ENCODE measurements at regions of chr4 and their contacts with region 1.

Region 1: GRCh38 chr4:185096032-185096653 is 46.9 kb upstream of the SLC25A4 start:
- DNase-seq: no peak
- H3K4me3 ChIP-seq: no peak overlapping the region
- H3K27ac ChIP-seq: no peak overlapping the region
- H3K4me1 ChIP-seq: no peaks in the 10 kb centered on the region
- H3K27me3 ChIP-seq: peaks cover 0 to 4% (median 0%) of the 10 kb centered on the region in 4 donors
- CTCF ChIP-seq: peak; percentile 47 to 64 (median 56)
- EP300 ChIP-seq: no peak
- POLR2A ChIP-seq: no peak

Region 2: DNA sequence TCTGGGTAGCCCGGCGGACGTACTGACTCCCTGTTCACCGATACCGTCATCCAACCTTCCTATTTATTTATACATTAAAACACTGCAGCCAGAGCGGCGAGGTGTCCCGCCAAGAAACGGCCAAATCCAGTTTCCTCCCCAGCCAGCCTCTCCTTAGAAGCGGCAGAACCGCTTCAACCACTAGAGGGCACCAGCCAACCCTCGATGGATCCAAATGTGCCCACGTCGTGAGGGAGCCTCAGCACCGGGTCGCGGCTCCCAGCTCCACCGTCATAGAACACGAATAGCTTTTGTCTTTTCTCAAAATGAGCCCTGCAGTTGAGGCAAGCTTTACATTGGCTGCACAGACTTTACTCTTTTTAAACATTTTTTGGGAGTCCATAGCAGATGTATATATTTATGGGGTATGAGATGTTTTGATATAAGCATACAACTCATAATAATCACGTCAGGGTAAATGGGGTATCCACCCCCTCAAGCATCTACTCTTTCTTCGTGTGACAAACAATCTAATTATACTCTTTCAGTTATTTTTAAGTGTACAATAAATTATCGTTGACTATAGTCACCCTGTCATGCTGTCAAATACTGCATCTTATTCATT is 90.8 kb before region 1 on chr4:
- intact Hi-C with region 1: loop called (anchors 2 kb)
- DNase-seq: no peak
- H3K4me3 ChIP-seq: peak overlapping the region; percentile 35 to 45 (median 40)
- H3K27ac ChIP-seq: no peak overlapping the region
- H3K4me1 ChIP-seq: peaks cover 12 to 14% (median 13%) of the 10 kb centered on the region in 4 donors
- H3K27me3 ChIP-seq: peaks cover 0 to 13% (median 0%) of the 10 kb centered on the region in 4 donors
- CTCF ChIP-seq: peak; percentile 76 to 96 (median 84)
- EP300 ChIP-seq: no peak
- POLR2A ChIP-seq: no peak

Region 3: DNA sequence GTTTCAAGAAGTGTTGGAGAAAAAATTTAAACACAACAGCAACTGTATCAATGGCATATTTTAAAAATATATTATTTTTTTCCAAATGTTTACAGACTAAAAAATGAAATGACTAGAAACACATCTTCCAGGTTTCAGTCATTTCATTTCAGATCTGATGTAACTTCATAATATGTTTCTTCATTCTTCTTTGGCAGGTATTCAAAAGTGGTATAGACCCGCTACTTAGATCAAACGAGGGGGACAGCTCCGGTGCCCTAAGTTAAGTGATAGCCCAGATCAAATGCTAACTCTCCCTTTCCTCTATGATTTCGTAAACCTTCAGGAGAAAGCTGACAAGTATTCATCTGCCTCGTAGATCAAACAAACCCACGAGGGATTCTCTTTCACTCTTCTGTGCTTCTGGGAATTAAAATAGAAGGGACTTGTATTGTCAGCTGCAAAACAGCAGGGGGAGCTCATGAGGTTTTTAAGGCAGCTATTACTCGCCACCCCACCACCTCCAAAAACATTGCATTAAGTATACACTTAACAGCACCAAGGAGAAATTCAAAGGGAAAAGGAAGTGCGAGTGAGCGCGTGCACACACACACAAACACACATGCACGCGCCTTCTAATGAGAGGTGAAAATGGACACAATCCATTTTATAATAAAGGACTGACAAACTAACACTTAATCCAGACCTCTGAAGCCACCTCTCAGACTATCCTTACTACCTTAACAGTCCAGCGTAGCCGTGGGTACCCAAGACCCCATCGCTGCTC is 56.5 kb before region 1 on chr4:
- intact Hi-C with region 1: loop called (anchors 2 kb)
- DNase-seq: peak; percentile 90
- H3K4me3 ChIP-seq: peak overlapping the region in 2 of 4 donors; percentile 2 to 11
- H3K27ac ChIP-seq: no peak overlapping the region
- H3K4me1 ChIP-seq: peaks cover 0 to 7% (median 6%) of the 10 kb centered on the region in 4 donors
- H3K27me3 ChIP-seq: no peaks in the 10 kb centered on the region
- CTCF ChIP-seq: peak; percentile 87 to 92 (median 90)
- EP300 ChIP-seq: no peak
- POLR2A ChIP-seq: no peak

Region 4: DNA sequence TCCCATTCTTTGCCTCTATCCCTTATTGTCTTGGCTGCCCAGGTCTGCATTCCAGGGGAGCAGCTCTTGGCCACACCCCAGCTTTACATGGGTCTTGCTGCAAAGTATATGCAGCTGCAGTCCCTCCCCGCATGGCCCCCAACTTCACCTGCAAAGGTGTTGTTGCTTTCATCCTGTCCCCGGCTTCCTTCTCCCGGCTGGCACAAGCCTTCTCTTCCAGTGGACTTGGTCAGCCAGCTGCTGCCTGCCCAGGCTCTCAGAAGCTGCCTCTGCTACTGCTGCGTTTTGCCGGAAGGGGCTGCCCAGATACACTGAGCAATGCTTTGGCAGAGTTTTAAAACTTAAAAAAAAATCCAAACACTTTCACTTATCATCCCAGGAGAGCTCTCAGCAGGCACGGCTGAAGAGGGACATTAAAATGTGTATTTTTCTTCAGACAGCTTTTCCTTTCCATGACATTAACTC is 560.4 kb after region 1 on chr4:
- intact Hi-C with region 1: no loop called
- DNase-seq: no peak
- H3K4me3 ChIP-seq: peak overlapping the region; percentile 52 to 70 (median 58)
- H3K27ac ChIP-seq: peak overlapping the region; percentile 75 to 79 (median 78)
- H3K4me1 ChIP-seq: peaks cover 12 to 40% (median 20%) of the 10 kb centered on the region in 4 donors
- H3K27me3 ChIP-seq: no peaks in the 10 kb centered on the region
- CTCF ChIP-seq: peak; percentile 48 to 74 (median 66)
- EP300 ChIP-seq: no peak
- POLR2A ChIP-seq: no peak

Measured in esophagus muscularis mucosa (tissue), 4 donors.